ENCODE measurements at regions of chr11 and their contacts with region 1.

Region 1: GRCh38 chr11:26860091-26860780 is 133.7 kb upstream of the FIBIN start:
- DNase-seq: no peak
- ATAC-seq: no peak

Region 2: DNA sequence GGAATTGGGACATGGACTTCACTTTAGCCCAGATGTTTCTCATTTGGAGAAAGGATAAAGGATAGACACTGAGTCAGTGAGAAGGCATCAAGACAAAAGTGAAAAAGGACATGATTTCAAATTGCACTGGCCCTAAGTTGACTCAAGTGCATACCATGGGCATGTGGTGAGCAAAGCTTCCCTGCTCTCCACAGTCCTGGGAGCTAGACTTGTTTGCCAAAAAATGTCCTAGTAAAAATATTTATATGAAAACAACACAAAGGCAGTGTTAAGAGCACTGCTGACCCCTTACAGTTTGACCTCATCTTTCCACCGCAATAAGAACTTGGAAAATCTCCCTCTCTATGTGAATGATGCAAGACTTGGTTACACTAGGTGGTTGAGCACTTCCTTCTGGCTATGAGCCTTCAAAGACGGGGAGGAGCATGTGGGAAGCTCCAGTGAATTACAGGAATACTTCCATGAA is 87.2 kb after region 1 on chr11:
- intact Hi-C with region 1: loop called (anchors 10 kb)
- DNase-seq: no peak
- ATAC-seq: peak; percentile 95

Region 3: DNA sequence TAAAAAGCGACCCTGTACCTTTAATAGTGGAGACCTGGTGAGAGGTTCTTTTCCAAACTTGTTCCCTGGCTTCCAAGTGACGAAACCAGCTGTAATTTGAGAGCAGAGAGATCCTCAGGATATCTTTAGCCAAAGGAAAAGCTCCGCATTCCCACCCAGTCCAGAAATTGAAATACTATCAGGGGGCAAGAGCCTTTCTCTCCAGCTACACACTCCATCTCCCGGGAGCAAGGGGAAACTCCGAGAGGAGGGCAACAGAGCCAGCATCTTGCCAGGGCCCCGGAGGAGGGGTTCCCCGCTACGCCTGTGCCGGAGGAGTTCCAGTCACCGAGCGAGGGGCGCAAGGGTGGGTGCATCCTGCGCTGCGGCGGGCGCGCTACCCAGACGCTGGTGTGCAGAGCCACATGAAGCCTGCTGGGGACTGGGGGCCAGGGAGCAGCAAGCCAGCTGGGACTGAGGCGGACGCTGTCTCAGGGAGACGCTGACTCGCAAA is 133.8 kb after region 1 on chr11 and contains the start of gene FIBIN:
- intact Hi-C with region 1: loop called (anchors 10 kb)
- DNase-seq: peak; percentile 59
- ATAC-seq: peak; percentile 65
- total RNA-seq, gene FIBIN: 8.3 TPM

Region 4: GRCh38 chr11:27124514-27125264 is 264.5 kb after region 1 on chr11:
- intact Hi-C with region 1: no loop called
- DNase-seq: no peak
- ATAC-seq: no peak

Region 5: DNA sequence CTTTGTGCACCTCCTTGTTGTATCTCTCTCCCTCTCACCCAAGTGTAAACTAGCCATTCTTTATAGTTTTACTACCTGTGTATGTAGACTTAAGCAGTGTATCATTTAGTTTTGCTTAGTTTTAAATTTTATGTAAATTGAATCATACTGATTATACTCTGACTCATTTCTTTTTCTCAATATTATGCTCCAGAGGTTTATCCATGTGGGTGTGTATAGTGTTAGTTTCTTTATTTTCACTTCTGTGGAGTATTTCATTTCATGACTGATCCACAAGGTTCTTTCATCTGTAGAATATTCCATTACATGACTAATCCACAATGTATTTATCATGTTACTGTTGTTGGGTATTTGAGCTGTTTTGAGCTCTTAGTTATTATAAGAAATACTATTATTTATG is 440.7 kb after region 1 on chr11:
- intact Hi-C with region 1: no loop called
- DNase-seq: no peak
- ATAC-seq: no peak